ENCODE measurements at regions of chr1 and their contacts with region 1.

Region 1: GRCh38 chr1:200738740-200739498 is at the start of gene CAMSAP2:
- DNase-seq: peak; percentile 69
- H3K4me3 Mint-ChIP-seq: peak within 1 kb of the TSS; percentile 98
- H3K27ac Mint-ChIP-seq: peak within 1 kb of the TSS; percentile 89
- H3K4me1 Mint-ChIP-seq: peaks cover 26% of the 10 kb centered on the region
- H3K27me3 Mint-ChIP-seq: no peaks in the 10 kb centered on the region
- total RNA-seq, gene CAMSAP2: 3.9 to 6.5 TPM

Region 2: GRCh38 chr1:200409761-200410565 is 329.0 kb before region 1 on chr1 and contains the start of gene ZNF281:
- CTCF ChIA-PET with region 1: no interaction called
- intact Hi-C with region 1: loop called (anchors 1 kb)
- DNase-seq: peak; percentile 96
- H3K4me3 Mint-ChIP-seq: peak within 1 kb of the TSS; percentile 96
- H3K27ac Mint-ChIP-seq: peak within 1 kb of the TSS; percentile 93
- H3K4me1 Mint-ChIP-seq: peaks cover 48% of the 10 kb centered on the region
- H3K27me3 Mint-ChIP-seq: no peaks in the 10 kb centered on the region
- total RNA-seq, gene ZNF281: 6.4 to 7.5 TPM

Region 3: DNA sequence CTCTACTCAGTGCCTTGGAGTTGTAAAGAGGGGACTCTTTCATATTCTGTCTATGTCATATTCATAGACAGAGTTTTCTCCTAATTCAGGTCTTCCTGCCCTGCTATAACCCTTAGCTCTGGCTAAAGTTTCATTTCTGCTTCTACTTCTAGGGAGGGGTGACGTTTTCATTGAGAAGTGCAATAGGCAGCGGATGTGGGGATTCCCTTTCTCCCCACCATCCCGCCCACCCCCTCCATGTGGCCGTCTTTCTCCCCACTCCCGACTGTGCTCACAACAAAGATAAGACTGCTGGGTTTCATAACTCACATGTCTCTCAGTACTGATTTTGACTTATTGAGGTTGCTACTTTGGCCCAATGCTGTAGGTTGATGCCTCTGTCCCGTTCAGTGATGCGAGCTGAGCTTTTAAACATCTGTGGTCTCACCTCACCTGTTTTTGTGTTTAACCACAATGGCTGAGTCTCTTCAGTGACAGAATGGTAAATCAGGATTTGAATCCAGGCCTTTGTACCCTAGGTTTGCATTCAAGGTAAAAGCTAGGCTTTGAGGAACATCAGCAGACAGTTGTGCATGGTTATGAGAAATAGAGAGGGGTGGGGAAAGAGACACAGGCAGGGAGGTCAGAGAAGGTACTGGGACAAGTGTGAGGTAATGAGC is 110.6 kb before region 1 on chr1:
- CTCF ChIA-PET with region 1: no interaction called
- intact Hi-C with region 1: loop called (anchors 1 kb)
- DNase-seq: peak; percentile 43
- H3K4me3 Mint-ChIP-seq: no peak overlapping the region
- H3K27ac Mint-ChIP-seq: no peak overlapping the region
- H3K4me1 Mint-ChIP-seq: peaks cover 32% of the 10 kb centered on the region
- H3K27me3 Mint-ChIP-seq: no peaks in the 10 kb centered on the region

Region 4: DNA sequence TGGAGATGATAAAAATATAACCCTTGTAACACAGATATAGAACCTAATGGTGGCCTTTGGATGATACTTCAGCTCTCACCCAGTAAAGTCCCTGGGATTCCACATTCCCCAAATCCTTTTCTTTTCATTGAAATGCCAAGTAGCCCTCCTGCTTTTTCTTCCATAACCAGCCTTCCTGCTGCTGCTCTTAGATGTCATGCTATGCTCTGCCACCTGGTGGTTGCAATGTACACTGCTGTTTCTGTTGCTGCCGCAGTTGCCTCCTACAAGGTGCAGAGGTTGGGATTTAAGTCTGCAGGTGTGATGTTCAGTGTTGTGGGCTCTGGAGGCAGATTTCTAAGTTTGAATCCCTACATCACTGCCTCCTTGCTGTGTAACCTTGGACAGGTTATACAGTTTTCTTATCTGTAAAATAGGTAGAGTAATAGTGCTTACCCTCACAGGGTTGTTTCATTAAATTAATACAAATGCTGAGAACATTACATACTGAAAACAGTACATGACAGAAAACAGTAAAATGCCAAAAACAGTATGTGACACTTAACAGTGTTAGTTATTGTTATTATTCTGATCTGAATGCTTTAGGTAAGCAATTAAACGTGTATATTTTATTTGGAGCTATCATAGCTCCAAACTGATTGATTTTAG is 64.1 kb after region 1 on chr1:
- CTCF ChIA-PET with region 1: interaction called, 4 read pairs
- intact Hi-C with region 1: loop called (anchors 1 kb)
- DNase-seq: peak; percentile 90
- H3K4me3 Mint-ChIP-seq: no peak overlapping the region
- H3K27ac Mint-ChIP-seq: no peak overlapping the region
- H3K4me1 Mint-ChIP-seq: peaks cover 4% of the 10 kb centered on the region
- H3K27me3 Mint-ChIP-seq: no peaks in the 10 kb centered on the region

Measured in activated naive CD4-positive, alpha-beta T cell treated with anti-CD3 and anti-CD28 coated beads for 36 hours (primary cell).